ENCODE measurements at regions of chr14 and their contacts with region 1.

Region 1: GRCh38 chr14:20682435-20683124 is 1.8 kb upstream of the RNASE4 start:
- DNase-seq: peak; percentile 94
- ATAC-seq: peak; percentile 91

Region 2: DNA sequence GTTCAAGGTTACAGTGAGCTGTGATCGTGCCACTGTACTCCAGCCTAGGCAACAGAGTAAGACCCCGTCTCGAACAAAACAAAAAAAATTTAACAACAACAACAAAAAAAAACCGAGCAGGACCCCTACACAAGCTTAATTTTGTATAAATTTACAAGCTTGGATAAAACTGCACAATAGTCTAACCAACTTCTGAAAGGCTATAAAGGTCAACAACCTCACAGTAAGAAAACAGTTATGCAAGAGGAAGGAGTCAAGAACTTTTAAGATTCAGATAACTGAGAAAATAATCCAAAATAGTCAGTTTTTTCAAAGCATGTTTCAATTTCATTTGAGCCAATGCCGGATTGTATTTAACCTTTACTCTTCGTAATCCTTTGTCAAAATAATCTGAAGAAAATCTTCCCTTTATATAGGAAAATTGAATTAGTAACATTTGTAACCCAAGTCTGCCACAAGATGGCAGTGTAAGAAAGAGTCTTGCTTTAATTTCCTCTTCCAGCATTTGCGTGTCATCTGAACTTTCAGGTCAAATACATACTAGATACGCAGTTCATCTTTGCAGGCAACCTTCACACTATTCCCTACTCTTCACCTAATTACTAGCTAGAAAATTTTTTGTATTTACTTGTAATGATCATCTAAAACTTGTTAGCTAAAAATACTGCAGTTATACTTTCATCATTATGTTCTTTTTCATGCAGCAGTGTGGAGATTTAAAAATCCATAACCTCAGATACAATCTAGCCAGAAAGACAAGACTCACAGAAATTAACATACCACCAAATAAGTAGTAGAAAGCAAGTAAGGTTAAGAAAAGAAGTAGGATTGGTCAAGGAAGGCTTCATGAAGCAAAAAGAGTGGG is 355.3 kb before region 1 on chr14:
- intact Hi-C with region 1: loop called (anchors 5 kb)
- DNase-seq: no peak
- ATAC-seq: peak; percentile 70

Region 3: GRCh38 chr14:20343092-20343861 is 339.3 kb before region 1 on chr14 and contains the start of gene PARP2:
- intact Hi-C with region 1: loop called (anchors 2 kb)
- DNase-seq: peak; percentile 98
- ATAC-seq: peak; percentile 96
- total RNA-seq, gene PARP2: 15.6 TPM

Region 4: DNA sequence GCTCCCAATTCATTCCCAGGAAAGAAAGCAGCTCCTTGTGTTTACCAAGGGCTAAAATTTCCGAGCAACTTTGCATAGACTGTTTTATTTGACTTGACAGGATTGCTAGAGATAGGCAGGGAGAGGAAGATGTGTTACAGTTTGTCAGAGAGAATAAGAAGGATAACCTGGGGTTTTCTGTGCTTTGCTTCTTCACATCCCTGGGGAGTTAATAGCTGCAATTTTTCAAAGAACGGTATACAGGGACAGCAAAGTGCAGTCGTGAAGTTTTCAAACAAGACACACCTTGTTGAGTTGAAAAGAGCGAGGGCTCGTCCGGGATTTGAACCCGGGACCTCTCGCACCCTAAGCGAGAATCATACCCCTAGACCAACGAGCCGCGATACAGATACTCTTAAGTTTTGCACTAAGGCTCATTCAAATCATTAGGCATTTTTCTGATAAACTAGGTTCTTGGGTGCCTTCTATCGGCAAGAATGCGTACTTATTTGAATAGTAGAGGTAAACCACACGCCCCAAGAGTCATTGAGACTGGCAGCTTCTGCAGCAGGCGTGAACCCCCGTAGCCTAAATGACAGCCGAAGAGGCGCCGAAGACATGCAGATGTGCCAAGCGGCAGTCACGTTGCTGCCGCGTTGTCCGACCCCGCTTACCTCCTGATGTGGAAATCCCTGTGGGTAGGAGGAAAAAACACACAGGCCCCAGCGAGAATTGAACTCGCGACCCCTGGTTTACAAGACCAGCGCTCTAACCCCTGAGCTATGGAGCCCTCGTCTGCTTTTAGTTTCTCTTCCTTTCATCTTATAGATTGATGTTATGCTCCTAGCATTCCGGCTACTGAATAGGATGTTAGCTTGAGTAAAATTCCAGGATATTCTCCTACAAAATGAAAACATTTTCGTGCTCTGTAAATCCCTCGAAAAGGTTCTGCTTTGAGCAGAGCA is 69.2 kb before region 1 on chr14:
- intact Hi-C with region 1: loop called (anchors 2 kb)
- DNase-seq: peak; percentile 83
- ATAC-seq: peak; percentile 81

Region 5: DNA sequence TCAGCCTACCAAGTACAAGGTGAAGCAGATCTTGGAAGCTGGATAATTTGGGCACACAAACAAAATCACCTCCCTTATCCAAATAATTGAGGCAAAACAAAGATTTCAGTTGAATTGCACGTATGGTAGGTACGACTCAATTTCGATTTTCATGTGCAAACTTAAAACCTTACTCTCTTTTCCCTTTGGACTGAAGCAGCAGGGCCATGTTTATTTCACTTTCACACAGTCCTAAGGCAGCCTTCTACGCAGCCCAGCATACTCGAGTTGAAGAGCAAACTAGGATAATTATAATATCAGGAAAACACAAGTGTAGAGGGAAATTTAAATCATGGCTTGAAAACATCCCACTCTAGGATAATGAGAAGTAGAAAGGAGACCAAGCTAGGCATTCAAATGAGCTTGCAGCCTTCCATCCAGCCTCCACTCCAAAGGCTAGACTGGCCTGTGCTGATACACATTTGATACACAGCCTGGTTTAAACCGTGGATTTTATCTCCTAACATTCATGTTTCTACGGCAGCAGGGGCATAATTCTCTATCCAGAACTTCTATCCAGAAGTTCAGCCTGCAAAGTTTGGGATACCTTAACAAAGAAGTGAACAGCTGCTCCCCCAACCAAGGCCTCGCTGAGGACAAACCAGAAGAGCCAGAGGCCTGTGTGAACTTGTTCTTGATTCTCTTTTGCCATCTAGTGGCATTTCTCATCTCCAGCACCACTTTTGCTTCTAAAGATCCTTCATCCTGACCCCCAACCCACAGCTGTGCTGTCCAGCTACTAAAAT is 357.2 kb after region 1 on chr14:
- intact Hi-C with region 1: loop called (anchors 10 kb)
- DNase-seq: peak; percentile 52
- ATAC-seq: peak; percentile 81

Measured in Right ventricle myocardium superior (tissue), 1 donor.